Naive thymus-derived CD4-positive, alpha-beta T cell (primary cell): ENCODE measurements at regions of chr5 and their contacts with region 1.

Region 1: GRCh38 chr5:145697251-145697990 is 137.7 kb downstream of the PRELID2 start:
- DNase-seq: peak in 1 of 9 donors; percentile 0
- ATAC-seq: no peak
- H3K4me3 ChIP-seq: no peak overlapping the region
- H3K4me3 Mint-ChIP-seq: no peak overlapping the region
- H3K27ac ChIP-seq: no peak overlapping the region
- H3K27ac Mint-ChIP-seq: no peak overlapping the region
- H3K4me1 ChIP-seq: no peaks in the 10 kb centered on the region
- H3K4me1 Mint-ChIP-seq: no peaks in the 10 kb centered on the region
- H3K27me3 ChIP-seq: no peaks in the 10 kb centered on the region
- H3K27me3 Mint-ChIP-seq: peaks cover 0 to 4% (median 4%) of the 10 kb centered on the region in 5 donors

Region 2: GRCh38 chr5:145825751-145826180 is 128.3 kb after region 1 on chr5:
- CTCF ChIA-PET with region 1: no interaction called
- POLR2A ChIA-PET with region 1: no interaction called
- intact Hi-C with region 1: loop called in 1 of 2 experiments (anchors 1 kb)
- DNase-seq: peak in 3 of 9 donors; percentile 4 to 7 (median 5)
- ATAC-seq: peak; percentile 50
- H3K4me3 ChIP-seq: no peak overlapping the region
- H3K4me3 Mint-ChIP-seq: no peak overlapping the region
- H3K27ac ChIP-seq: no peak overlapping the region
- H3K27ac Mint-ChIP-seq: no peak overlapping the region
- H3K4me1 ChIP-seq: no peaks in the 10 kb centered on the region
- H3K4me1 Mint-ChIP-seq: peaks cover 0 to 8% (median 0%) of the 10 kb centered on the region in 7 donors
- H3K27me3 ChIP-seq: no peaks in the 10 kb centered on the region
- H3K27me3 Mint-ChIP-seq: peaks cover 0 to 11% (median 0%) of the 10 kb centered on the region in 5 donors

Region 3: DNA sequence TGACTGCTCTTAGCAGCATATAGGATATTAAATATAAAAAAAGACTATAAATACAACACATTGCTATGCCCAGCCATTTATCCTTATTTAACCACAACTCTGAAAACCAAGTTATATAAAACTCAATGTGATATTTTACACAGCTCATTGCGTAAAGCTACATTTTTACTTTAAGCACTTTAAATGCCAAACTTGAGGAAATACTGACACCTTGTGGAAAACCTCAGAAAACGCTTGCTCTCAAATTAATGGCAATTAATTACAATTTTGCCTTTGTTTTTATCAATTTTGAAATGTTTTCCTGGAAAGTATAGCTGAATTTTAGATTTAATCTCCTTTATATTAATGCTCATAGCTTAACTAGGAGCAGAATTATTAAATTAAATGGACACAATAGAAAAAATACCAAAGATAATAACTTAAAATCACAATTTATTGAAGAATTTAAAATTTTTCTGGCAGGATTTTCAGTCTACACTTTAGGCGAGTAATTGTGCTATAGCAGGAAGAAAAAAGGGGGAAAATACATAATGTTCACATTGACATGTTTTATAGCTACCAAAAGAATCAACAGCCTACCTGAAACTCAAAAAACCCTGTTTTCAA is 433.1 kb after region 1 on chr5:
- CTCF ChIA-PET with region 1: no interaction called
- POLR2A ChIA-PET with region 1: no interaction called
- intact Hi-C with region 1: loop called in 1 of 2 experiments (anchors 5 kb)
- DNase-seq: peak in 3 of 9 donors; percentile 4 to 12 (median 4)
- ATAC-seq: no peak
- H3K4me3 ChIP-seq: no peak overlapping the region
- H3K4me3 Mint-ChIP-seq: no peak overlapping the region
- H3K27ac ChIP-seq: no peak overlapping the region
- H3K27ac Mint-ChIP-seq: no peak overlapping the region
- H3K4me1 ChIP-seq: no peaks in the 10 kb centered on the region
- H3K4me1 Mint-ChIP-seq: peaks cover 0 to 3% (median 0%) of the 10 kb centered on the region in 7 donors
- H3K27me3 ChIP-seq: no peaks in the 10 kb centered on the region
- H3K27me3 Mint-ChIP-seq: no peaks in the 10 kb centered on the region

Region 4: GRCh38 chr5:146426853-146427618 is 729.6 kb after region 1 on chr5:
- CTCF ChIA-PET with region 1: no interaction called
- POLR2A ChIA-PET with region 1: no interaction called
- intact Hi-C with region 1: loop called in 1 of 2 experiments (anchors 5 kb)
- DNase-seq: peak in 5 of 9 donors; percentile 33 to 47 (median 45)
- ATAC-seq: peak; percentile 74
- H3K4me3 ChIP-seq: no peak overlapping the region
- H3K4me3 Mint-ChIP-seq: peak overlapping the region in 1 of 10 donors; percentile 33
- H3K27ac ChIP-seq: no peak overlapping the region
- H3K27ac Mint-ChIP-seq: peak overlapping the region in 2 of 9 donors; percentile 5 to 22
- H3K4me1 ChIP-seq: no peaks in the 10 kb centered on the region
- H3K4me1 Mint-ChIP-seq: peaks cover 0 to 8% (median 5%) of the 10 kb centered on the region in 7 donors
- H3K27me3 ChIP-seq: no peaks in the 10 kb centered on the region
- H3K27me3 Mint-ChIP-seq: peaks cover 11 to 28% (median 19%) of the 10 kb centered on the region in 5 donors